CD4-positive, alpha-beta T cell (primary cell): ENCODE measurements at regions of chr2 and their contacts with region 1.

Region 1: GRCh38 chr2:61538200-61538919 is at the start of gene XPO1:
- DNase-seq: peak; percentile 96 to 100 (median 98)
- ATAC-seq: peak; percentile 75
- H3K4me3 ChIP-seq: peak within 1 kb of the TSS; percentile 85
- H3K4me3 Mint-ChIP-seq: peak within 1 kb of the TSS; percentile 99
- H3K27ac ChIP-seq: peak within 1 kb of the TSS; percentile 98 to 99
- H3K27ac Mint-ChIP-seq: peak within 1 kb of the TSS; percentile 97
- H3K4me1 ChIP-seq: peaks cover 15% of the 10 kb centered on the region
- H3K4me1 Mint-ChIP-seq: peaks cover 34% of the 10 kb centered on the region
- H3K27me3 ChIP-seq: no peaks in the 10 kb centered on the region
- H3K27me3 Mint-ChIP-seq: no peaks in the 10 kb centered on the region
- CTCF ChIP-seq: no peak
- total RNA-seq, gene XPO1: 111 to 118 TPM

Region 2: DNA sequence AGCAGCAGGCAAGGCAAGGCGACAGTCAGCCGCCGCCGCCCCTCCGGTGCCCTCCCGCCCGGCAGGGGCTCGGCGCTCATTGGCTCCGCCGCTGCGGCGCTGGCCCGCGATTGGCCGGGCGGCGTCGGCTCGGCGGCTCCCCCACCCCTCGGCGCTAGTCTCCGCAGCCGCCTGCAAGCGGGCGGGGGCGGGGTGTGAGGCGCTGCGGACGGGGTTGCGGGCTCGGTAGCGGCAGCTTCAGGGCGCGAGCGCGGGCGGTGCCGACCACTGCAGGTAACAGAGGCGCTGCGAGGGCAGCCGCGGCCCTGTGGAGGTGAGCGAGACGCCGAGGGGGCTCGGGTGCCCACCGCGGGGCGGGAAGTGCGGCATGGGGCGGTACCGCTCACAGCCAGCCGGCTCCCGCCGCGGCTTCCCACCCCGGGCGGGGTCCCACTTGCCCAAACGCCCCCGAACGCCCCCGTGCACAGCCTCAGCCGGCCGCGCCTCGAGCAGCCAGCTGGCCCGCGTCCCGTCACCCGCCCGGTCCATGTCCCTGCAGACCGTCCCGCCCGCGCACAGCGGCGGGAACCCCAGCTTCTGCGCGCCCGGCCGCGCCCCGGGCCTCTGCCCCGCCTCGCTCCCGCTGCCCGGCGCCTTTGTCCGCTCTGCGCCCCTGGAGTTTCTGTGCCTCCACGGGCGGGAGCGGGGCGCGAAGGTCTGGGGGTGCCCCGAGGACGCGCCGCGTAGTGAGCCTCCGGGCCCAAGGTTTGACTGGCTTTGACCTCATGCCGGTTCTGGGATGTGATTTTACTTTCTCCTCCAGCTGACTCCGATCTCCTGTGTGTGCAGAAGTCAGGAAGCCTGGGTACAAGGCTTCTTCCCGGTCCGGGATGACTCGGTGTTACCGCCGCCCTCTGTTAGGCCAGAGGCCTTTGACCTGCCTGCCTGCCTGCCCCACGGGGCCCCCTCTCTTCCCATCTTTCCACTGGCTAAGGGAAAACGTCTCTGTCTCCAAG is 472.3 kb before region 1 on chr2 and contains the start of gene SANBR:
- CTCF ChIA-PET with region 1: no interaction called
- POLR2A ChIA-PET with region 1: interaction called, 4 read pairs
- intact Hi-C with region 1: loop called in 1 of 2 experiments (anchors 5 kb)
- DNase-seq: peak; percentile 59 to 93 (median 78)
- ATAC-seq: peak; percentile 97
- H3K4me3 ChIP-seq: peak within 1 kb of the TSS; percentile 63
- H3K4me3 Mint-ChIP-seq: peak within 1 kb of the TSS; percentile 99
- H3K27ac ChIP-seq: peak within 1 kb of the TSS in 1 of 2 donors; percentile 30
- H3K27ac Mint-ChIP-seq: peak within 1 kb of the TSS; percentile 68
- H3K4me1 ChIP-seq: peaks cover 11% of the 10 kb centered on the region
- H3K4me1 Mint-ChIP-seq: peaks cover 7% of the 10 kb centered on the region
- H3K27me3 ChIP-seq: no peaks in the 10 kb centered on the region
- H3K27me3 Mint-ChIP-seq: no peaks in the 10 kb centered on the region
- CTCF ChIP-seq: no peak
- total RNA-seq, gene SANBR: 1.1 to 1.3 TPM

Region 3: DNA sequence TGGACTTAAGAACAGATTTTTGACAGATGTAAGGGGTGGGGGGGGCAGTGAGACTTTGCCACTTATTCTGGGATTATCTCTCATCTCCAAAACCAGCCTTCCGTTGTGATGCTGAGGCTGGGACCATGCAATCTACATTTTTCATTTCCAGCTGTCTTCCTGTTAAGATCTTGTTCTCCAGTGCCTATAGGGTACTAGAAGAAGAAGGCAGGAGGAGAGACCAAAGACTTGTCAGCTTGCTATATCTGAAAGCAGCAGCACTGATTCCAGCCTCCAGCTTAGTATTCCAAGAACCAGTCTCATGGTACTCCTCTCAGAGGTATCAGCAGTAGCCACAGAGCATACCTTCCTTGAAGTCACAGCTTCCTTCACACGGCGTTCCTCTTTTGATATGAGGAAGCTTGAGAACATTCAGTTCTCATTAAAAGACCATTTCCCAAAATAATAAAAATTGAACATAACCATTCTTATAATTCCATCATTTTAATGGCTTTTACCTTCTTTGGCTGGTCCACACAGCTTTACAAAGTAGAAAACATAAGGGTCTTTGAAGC is 117.3 kb before region 1 on chr2:
- CTCF ChIA-PET with region 1: interaction called, 13 read pairs
- POLR2A ChIA-PET with region 1: interaction called, 39 read pairs
- intact Hi-C with region 1: loop called (anchors 5 to 10 kb)
- DNase-seq: peak in 1 of 14 experiments; percentile 13
- ATAC-seq: no peak
- H3K4me3 ChIP-seq: no peak overlapping the region
- H3K4me3 Mint-ChIP-seq: peak overlapping the region; percentile 54
- H3K27ac ChIP-seq: no peak overlapping the region
- H3K27ac Mint-ChIP-seq: peak overlapping the region; percentile 76
- H3K4me1 ChIP-seq: peaks cover 31% of the 10 kb centered on the region
- H3K4me1 Mint-ChIP-seq: peaks cover 70% of the 10 kb centered on the region
- H3K27me3 ChIP-seq: no peaks in the 10 kb centered on the region
- H3K27me3 Mint-ChIP-seq: no peaks in the 10 kb centered on the region
- CTCF ChIP-seq: no peak

Region 4: GRCh38 chr2:61493523-61493942 is 44.8 kb before region 1 on chr2:
- CTCF ChIA-PET with region 1: no interaction called
- POLR2A ChIA-PET with region 1: interaction called, 16 read pairs
- intact Hi-C with region 1: loop called (anchors 5 kb)
- DNase-seq: peak in 4 of 14 experiments; percentile 21 to 43 (median 40)
- ATAC-seq: peak; percentile 71
- H3K4me3 ChIP-seq: no peak overlapping the region
- H3K4me3 Mint-ChIP-seq: peak overlapping the region; percentile 48
- H3K27ac ChIP-seq: peak overlapping the region; percentile 23 to 34
- H3K27ac Mint-ChIP-seq: peak overlapping the region; percentile 79
- H3K4me1 ChIP-seq: peaks cover 10% of the 10 kb centered on the region
- H3K4me1 Mint-ChIP-seq: peaks cover 32% of the 10 kb centered on the region
- H3K27me3 ChIP-seq: no peaks in the 10 kb centered on the region
- H3K27me3 Mint-ChIP-seq: no peaks in the 10 kb centered on the region
- CTCF ChIP-seq: no peak

Region 5: DNA sequence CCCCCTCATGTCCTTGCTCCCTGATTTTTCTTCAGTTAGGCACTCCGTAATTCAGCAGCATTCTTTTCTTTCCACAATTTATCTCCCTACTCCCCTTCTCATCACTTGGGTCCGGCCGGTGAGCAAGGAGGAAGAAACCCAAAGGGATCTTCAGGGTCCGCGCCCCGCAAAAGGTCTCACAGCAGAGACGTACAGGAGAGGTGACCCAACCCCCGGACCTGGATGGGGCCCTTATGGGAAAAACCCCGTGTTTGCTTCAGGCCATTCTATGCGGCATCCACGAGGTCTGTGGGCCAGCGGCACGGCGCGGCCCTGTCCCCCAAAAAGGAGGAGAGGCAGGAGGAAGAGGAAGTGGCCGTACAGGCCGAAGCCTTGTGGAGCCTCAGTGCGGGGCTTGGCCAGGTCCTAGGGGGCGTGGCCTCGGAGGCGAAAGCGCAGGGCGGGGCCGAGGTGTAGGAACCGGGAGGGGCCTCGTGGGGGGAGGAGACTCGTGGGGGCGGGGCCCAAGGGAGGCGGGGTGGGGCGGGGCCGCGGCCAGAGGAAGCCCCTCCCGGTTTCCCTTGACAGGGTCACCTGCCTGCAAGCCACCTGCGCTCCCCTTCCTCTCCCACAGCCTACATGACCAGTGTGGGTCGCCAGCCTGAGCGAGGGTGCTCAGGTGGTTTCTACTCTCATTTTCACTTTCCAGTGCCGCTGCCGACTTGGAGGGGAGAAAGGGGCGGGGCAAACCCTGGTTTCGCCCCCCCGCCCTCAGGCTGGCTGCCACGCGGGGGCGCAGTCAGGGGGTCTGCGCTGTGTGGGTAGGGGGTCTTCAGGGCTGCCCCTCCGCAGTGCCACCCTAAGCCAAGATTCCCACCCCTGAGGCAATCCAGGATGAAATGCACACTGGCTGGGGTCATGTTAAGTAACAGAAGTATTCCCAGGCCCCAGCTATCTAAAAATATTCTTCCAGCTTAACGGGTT is 156.2 kb after region 1 on chr2:
- CTCF ChIA-PET with region 1: no interaction called
- POLR2A ChIA-PET with region 1: no interaction called
- intact Hi-C with region 1: loop called (anchors 5 to 10 kb)
- DNase-seq: peak; percentile 65 to 90 (median 80)
- ATAC-seq: peak; percentile 95
- H3K4me3 ChIP-seq: peak overlapping the region; percentile 83
- H3K4me3 Mint-ChIP-seq: peak overlapping the region; percentile 89
- H3K27ac ChIP-seq: peak overlapping the region; percentile 29 to 59
- H3K27ac Mint-ChIP-seq: peak overlapping the region; percentile 85
- H3K4me1 ChIP-seq: peaks cover 11% of the 10 kb centered on the region
- H3K4me1 Mint-ChIP-seq: peaks cover 9% of the 10 kb centered on the region
- H3K27me3 ChIP-seq: no peaks in the 10 kb centered on the region
- H3K27me3 Mint-ChIP-seq: no peaks in the 10 kb centered on the region
- CTCF ChIP-seq: peak; percentile 31

Region 6: GRCh38 chr2:61888267-61889055 is 350.1 kb after region 1 on chr2 and contains the start of gene CCT4:
- CTCF ChIA-PET with region 1: no interaction called
- POLR2A ChIA-PET with region 1: no interaction called
- intact Hi-C with region 1: loop called in 1 of 2 experiments (anchors 2 kb)
- DNase-seq: peak; percentile 83 to 96 (median 88)
- ATAC-seq: peak; percentile 79
- H3K4me3 ChIP-seq: peak within 1 kb of the TSS; percentile 79
- H3K4me3 Mint-ChIP-seq: peak within 1 kb of the TSS; percentile 100
- H3K27ac ChIP-seq: peak within 1 kb of the TSS; percentile 90 to 98
- H3K27ac Mint-ChIP-seq: peak within 1 kb of the TSS; percentile 100
- H3K4me1 ChIP-seq: peaks cover 19% of the 10 kb centered on the region
- H3K4me1 Mint-ChIP-seq: peaks cover 38% of the 10 kb centered on the region
- H3K27me3 ChIP-seq: no peaks in the 10 kb centered on the region
- H3K27me3 Mint-ChIP-seq: no peaks in the 10 kb centered on the region
- CTCF ChIP-seq: no peak
- total RNA-seq, gene CCT4: 100 to 114 TPM